Activated CD8-positive, alpha-beta T cell treated with anti-CD3 and anti-CD28 coated beads for 36 hours (primary cell): ENCODE measurements at regions of chr12 and their contacts with region 1.

Region 1: DNA sequence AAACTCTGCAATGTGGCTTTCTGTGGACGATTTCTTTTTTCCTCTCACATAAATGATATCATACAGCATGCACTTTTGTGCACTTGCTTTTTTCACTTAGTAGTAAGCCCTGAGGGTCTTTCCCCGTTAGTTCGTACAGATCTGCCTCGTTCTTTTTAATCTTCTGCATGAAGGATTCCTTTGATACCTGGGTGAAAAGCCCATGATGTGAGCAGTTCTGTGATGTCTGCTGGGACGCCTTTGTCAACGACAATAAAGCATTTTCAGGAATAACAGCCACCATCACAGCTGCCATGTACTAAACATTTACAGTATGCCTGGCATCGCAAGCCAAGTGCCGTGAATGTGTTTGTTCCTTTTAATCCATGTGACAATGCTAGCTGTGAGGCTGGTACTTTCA is 99.2 kb downstream of the KSR2 start:
- DNase-seq: no peak
- ATAC-seq: no peak
- H3K4me3 Mint-ChIP-seq: no peak overlapping the region
- H3K27ac Mint-ChIP-seq: no peak overlapping the region
- H3K4me1 Mint-ChIP-seq: no peaks in the 10 kb centered on the region
- H3K27me3 Mint-ChIP-seq: peaks cover 4% of the 10 kb centered on the region
- CTCF ChIP-seq: no peak

Region 2: GRCh38 chr12:117830471-117830870 is 39.1 kb before region 1 on chr12:
- CTCF ChIA-PET with region 1: no interaction called
- POLR2A ChIA-PET with region 1: no interaction called
- intact Hi-C with region 1: no loop called
- DNase-seq: no peak
- ATAC-seq: no peak
- H3K4me3 Mint-ChIP-seq: no peak overlapping the region
- H3K27ac Mint-ChIP-seq: no peak overlapping the region
- H3K4me1 Mint-ChIP-seq: no peaks in the 10 kb centered on the region
- H3K27me3 Mint-ChIP-seq: no peaks in the 10 kb centered on the region
- CTCF ChIP-seq: no peak

Region 3: GRCh38 chr12:117857632-117858612 is 11.6 kb before region 1 on chr12:
- CTCF ChIA-PET with region 1: interaction called, 11 read pairs
- POLR2A ChIA-PET with region 1: no interaction called
- intact Hi-C with region 1: no loop called
- DNase-seq: peak; percentile 78
- ATAC-seq: peak; percentile 84
- H3K4me3 Mint-ChIP-seq: no peak overlapping the region
- H3K27ac Mint-ChIP-seq: no peak overlapping the region
- H3K4me1 Mint-ChIP-seq: no peaks in the 10 kb centered on the region
- H3K27me3 Mint-ChIP-seq: peaks cover 3% of the 10 kb centered on the region
- CTCF ChIP-seq: peak; percentile 57

Region 4: GRCh38 chr12:117924818-117925217 is 55.3 kb after region 1 on chr12:
- CTCF ChIA-PET with region 1: no interaction called
- POLR2A ChIA-PET with region 1: no interaction called
- intact Hi-C with region 1: no loop called
- DNase-seq: no peak
- ATAC-seq: no peak
- H3K4me3 Mint-ChIP-seq: no peak overlapping the region
- H3K27ac Mint-ChIP-seq: no peak overlapping the region
- H3K4me1 Mint-ChIP-seq: no peaks in the 10 kb centered on the region
- H3K27me3 Mint-ChIP-seq: peaks cover 10% of the 10 kb centered on the region
- CTCF ChIP-seq: no peak